Psoas muscle (tissue), 8 donors: ENCODE measurements at regions of chr14 and their contacts with region 1.

Region 1: GRCh38 chr14:88492272-88493089 is 62.3 kb downstream of the PTPN21 start:
- DNase-seq: no peak
- ATAC-seq: peak; percentile 77 to 93 (median 82)
- H3K4me3 ChIP-seq: no peak overlapping the region
- H3K27ac ChIP-seq: no peak overlapping the region
- H3K4me1 ChIP-seq: no peaks in the 10 kb centered on the region
- H3K27me3 ChIP-seq: no peaks in the 10 kb centered on the region
- CTCF ChIP-seq: peak; percentile 91

Region 2: GRCh38 chr14:88452231-88452630 is 40.2 kb before region 1 on chr14:
- intact Hi-C with region 1: no loop called
- DNase-seq: no peak
- ATAC-seq: no peak
- H3K4me3 ChIP-seq: no peak overlapping the region
- H3K27ac ChIP-seq: no peak overlapping the region
- H3K4me1 ChIP-seq: no peaks in the 10 kb centered on the region
- H3K27me3 ChIP-seq: no peaks in the 10 kb centered on the region
- CTCF ChIP-seq: no peak

Region 3: DNA sequence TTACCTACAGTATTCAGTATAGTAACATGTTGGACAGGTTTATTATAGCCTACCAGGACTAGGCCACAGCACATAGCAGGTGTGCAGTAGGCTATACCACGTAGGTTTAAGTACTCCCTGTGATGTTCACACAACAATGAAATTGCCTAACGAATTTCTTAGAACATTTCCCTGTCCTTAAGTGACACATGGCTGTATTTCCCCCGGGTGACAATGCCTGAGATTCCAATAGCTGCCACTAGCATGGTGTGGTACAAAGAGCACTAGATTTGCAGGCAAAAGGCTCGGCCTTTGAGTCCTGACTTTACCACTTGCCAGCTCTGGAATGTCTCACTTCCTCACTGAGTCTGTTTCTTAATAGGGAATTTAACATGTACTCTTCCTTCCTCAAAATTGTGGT is 42.7 kb after region 1 on chr14:
- intact Hi-C with region 1: no loop called
- DNase-seq: no peak
- ATAC-seq: peak in 3 of 4 donors; percentile 61 to 66 (median 65)
- H3K4me3 ChIP-seq: no peak overlapping the region
- H3K27ac ChIP-seq: no peak overlapping the region
- H3K4me1 ChIP-seq: peaks cover 23% of the 10 kb centered on the region
- H3K27me3 ChIP-seq: no peaks in the 10 kb centered on the region
- CTCF ChIP-seq: no peak

Region 4: DNA sequence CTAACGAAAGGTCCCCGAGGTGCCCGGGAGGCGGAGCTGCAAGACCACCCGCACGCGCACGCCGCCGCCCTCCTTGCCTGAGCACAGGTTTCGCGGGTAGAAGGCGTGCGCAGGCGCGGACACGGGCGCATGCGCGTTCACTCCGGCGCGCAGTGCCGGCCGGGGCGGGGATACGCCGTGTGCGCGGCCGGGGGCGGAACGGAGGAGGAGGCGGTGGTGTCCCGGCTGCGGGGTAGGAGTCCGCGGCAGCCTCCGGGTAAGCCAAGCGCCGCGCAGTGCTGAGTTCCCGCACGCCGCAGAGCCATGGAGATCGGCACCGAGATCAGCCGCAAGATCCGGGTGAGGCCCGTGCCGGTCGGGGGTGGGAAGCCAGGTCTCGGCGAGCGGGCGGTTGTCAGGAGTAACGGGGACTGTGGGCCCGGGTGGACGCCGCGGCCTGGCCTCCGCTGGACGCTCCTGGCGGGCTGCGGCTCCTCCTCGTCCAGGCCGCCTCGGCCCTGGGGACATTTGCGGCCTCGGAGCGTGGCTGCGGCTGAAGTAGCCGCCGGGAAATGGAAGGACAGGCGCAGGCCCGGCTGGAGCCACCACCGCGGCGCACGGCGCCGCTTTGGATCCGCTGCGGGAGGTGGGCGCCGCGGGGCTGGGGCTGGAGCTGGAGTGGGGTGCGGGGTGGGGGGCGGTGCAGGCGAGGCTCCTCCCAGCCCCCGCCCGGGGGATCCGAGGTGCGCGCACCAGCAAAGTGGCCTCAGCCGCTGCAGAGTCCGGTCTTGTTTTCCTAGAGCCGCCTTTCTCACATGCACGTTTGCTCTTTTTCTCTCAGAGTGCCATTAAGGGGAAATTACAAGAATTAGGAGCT is 70.6 kb after region 1 on chr14 and contains the start of gene ZC3H14:
- intact Hi-C with region 1: loop called (anchors 5 kb)
- DNase-seq: peak; percentile 88 to 92
- ATAC-seq: peak; percentile 98 to 99 (median 99)
- H3K4me3 ChIP-seq: peak within 1 kb of the TSS; percentile 81
- H3K27ac ChIP-seq: peak within 1 kb of the TSS; percentile 85
- H3K4me1 ChIP-seq: peaks cover 9% of the 10 kb centered on the region
- H3K27me3 ChIP-seq: no peaks in the 10 kb centered on the region
- CTCF ChIP-seq: no peak
- total RNA-seq, gene ZC3H14: 34.0 to 38.8 (median 37.9) TPM

Region 5: DNA sequence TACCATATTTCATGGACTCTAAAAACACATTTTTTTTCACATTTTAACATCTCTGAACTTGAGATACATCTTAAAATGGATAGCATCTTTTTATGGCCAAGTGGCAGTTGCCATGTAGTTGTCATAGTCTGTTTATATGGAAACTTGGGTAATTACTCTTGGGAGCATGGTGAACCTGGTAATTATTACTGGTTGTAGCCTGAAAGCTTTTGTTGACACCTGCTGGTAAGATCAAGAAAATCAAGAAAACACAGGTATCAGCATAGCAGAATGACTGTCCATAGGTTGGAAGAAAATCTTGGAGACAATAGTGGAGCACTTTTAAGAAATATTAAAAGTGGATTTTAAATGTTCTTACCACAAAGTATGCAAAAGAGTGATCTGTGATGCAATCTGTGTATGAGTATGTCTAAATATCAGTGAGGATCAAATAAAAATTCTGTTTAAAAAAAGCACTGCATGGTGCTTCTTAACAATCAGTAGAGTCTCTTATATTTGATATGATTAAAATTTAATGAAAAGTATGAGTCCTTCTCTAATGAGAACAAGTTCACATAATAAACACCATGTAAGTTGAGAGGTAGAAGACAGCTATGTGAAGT is 376.2 kb after region 1 on chr14:
- intact Hi-C with region 1: loop called in 1 of 2 experiments (anchors 10 kb)
- DNase-seq: no peak
- ATAC-seq: no peak
- H3K4me3 ChIP-seq: no peak overlapping the region
- H3K27ac ChIP-seq: no peak overlapping the region
- H3K4me1 ChIP-seq: no peaks in the 10 kb centered on the region
- H3K27me3 ChIP-seq: no peaks in the 10 kb centered on the region
- CTCF ChIP-seq: peak; percentile 26

Region 6: DNA sequence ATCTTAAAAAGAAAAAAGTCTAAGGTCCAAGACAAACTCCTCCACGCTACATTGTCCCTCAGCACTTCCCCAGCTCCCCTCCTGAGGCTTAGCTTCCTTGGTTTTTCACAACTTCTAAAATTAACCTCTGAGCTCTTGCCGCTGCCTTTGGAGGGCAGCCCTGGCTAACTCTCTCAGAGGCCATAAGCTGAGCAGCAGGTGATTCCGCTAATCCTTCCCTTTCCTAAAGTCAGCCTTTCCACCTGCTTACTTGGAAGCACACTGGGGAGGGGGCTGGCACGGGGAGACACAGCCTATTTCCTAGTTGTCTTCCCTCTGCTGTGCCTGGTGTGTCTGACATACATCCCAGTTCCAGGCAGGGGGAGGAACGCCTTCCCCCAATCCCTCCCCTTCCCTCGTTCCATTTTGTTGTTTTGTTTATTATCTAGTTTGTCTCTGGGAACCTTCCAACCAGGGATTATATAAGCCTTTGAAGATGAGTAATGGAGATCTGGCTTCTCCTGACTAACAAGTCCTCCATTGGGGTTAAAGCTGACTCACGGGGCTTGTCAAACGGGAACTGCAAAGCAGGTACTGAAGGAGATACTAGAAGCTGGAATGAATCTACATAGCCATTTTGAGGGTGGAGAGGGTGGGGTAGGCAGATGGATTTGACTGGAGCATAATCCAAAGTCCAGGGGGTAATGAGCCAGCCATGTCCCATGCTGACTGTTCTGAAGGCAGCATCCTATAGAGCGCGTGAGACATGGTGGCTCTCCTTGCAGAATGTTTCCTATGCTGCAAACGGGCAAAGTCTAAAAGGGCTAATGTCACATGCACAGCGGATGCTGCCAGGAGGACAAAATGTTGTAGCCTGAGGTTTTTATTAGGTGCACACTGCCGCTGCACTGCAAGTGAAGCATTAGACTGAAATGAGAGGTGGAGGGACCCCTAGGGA is 693.7 kb after region 1 on chr14:
- intact Hi-C with region 1: no loop called
- DNase-seq: peak in 1 of 2 donors; percentile 69
- ATAC-seq: peak; percentile 79 to 90 (median 86)
- H3K4me3 ChIP-seq: peak overlapping the region; percentile 44
- H3K27ac ChIP-seq: peak overlapping the region; percentile 92
- H3K4me1 ChIP-seq: peaks cover 45% of the 10 kb centered on the region
- H3K27me3 ChIP-seq: no peaks in the 10 kb centered on the region
- CTCF ChIP-seq: no peak